Activated CD4-positive, alpha-beta memory T cell treated with anti-CD3 and anti-CD28 coated beads for 36 hours (primary cell): ENCODE measurements at regions of chr19 and their contacts with region 1.

Region 1: GRCh38 chr19:42219812-42220750 is at the start of gene ZNF526:
- DNase-seq: peak; percentile 98
- H3K4me3 Mint-ChIP-seq: peak within 1 kb of the TSS; percentile 92
- H3K27ac Mint-ChIP-seq: peak within 1 kb of the TSS; percentile 99
- H3K4me1 Mint-ChIP-seq: peaks cover 43% of the 10 kb centered on the region
- H3K27me3 Mint-ChIP-seq: peaks cover 1% of the 10 kb centered on the region
- total RNA-seq, gene ZNF526: 12.3 to 14.9 TPM

Region 2: GRCh38 chr19:42176990-42177685 is 42.9 kb before region 1 on chr19:
- CTCF ChIA-PET with region 1: interaction called, 3 read pairs
- POLR2A ChIA-PET with region 1: interaction called, 4 read pairs
- intact Hi-C with region 1: loop called (anchors 1 kb)
- DNase-seq: peak; percentile 85
- H3K4me3 Mint-ChIP-seq: no peak overlapping the region
- H3K27ac Mint-ChIP-seq: no peak overlapping the region
- H3K4me1 Mint-ChIP-seq: peaks cover 14% of the 10 kb centered on the region
- H3K27me3 Mint-ChIP-seq: peaks cover 11% of the 10 kb centered on the region